ENCODE measurements at regions of chr7 and their contacts with region 1.

Region 1: GRCh38 chr7:156903232-156903909 is 10.4 kb upstream of the LMBR1 start:
- DNase-seq: peak in 6 of 9 donors; percentile 12 to 43 (median 28)
- ATAC-seq: peak; percentile 46
- H3K4me3 ChIP-seq: no peak overlapping the region
- H3K4me3 Mint-ChIP-seq: peak overlapping the region in 9 of 10 donors; percentile 1 to 59 (median 51)
- H3K27ac ChIP-seq: no peak overlapping the region
- H3K27ac Mint-ChIP-seq: peak overlapping the region; percentile 22 to 56 (median 44)
- H3K4me1 ChIP-seq: peaks cover 0 to 11% of the 10 kb centered on the region in 2 donors
- H3K4me1 Mint-ChIP-seq: peaks cover 7 to 13% (median 10%) of the 10 kb centered on the region in 7 donors
- H3K27me3 ChIP-seq: peaks cover 0 to 2% of the 10 kb centered on the region in 2 donors
- H3K27me3 Mint-ChIP-seq: peaks cover 0 to 5% (median 0%) of the 10 kb centered on the region in 5 donors

Region 2: DNA sequence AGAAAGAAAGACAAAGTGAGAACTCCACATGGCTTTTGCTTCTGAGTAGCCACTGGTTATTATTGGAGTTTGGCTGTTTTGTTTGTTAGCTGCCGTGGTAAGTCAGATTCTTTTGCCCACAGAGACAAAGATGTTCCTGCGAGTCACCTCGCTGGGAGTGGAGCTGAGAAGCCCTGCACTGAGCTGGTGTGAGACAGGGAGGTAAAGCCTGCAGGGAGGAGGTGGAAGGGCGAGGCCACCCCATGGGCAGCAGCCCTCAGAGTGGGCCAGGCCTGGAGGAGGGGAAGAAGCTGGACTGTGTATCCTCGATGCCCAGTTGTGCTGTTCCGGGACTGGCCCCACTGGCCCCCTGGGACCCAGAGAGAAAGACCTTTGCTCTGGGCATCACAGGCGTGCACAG is 31.9 kb after region 1 on chr7:
- CTCF ChIA-PET with region 1: no interaction called
- POLR2A ChIA-PET with region 1: no interaction called
- intact Hi-C with region 1: no loop called
- DNase-seq: no peak
- ATAC-seq: no peak
- H3K4me3 ChIP-seq: no peak overlapping the region
- H3K4me3 Mint-ChIP-seq: no peak overlapping the region
- H3K27ac ChIP-seq: no peak overlapping the region
- H3K27ac Mint-ChIP-seq: no peak overlapping the region
- H3K4me1 ChIP-seq: no peaks in the 10 kb centered on the region
- H3K4me1 Mint-ChIP-seq: peaks cover 0 to 12% (median 3%) of the 10 kb centered on the region in 7 donors
- H3K27me3 ChIP-seq: no peaks in the 10 kb centered on the region
- H3K27me3 Mint-ChIP-seq: peaks cover 0 to 15% (median 9%) of the 10 kb centered on the region in 5 donors

Region 3: GRCh38 chr7:157113607-157114006 is 210.2 kb after region 1 on chr7:
- CTCF ChIA-PET with region 1: interaction called, 11 read pairs
- POLR2A ChIA-PET with region 1: no interaction called
- intact Hi-C with region 1: no loop called
- DNase-seq: no peak
- ATAC-seq: no peak
- H3K4me3 ChIP-seq: no peak overlapping the region
- H3K4me3 Mint-ChIP-seq: no peak overlapping the region
- H3K27ac ChIP-seq: no peak overlapping the region
- H3K27ac Mint-ChIP-seq: no peak overlapping the region
- H3K4me1 ChIP-seq: no peaks in the 10 kb centered on the region
- H3K4me1 Mint-ChIP-seq: no peaks in the 10 kb centered on the region
- H3K27me3 ChIP-seq: no peaks in the 10 kb centered on the region
- H3K27me3 Mint-ChIP-seq: peaks cover 0 to 29% (median 22%) of the 10 kb centered on the region in 5 donors

Region 4: DNA sequence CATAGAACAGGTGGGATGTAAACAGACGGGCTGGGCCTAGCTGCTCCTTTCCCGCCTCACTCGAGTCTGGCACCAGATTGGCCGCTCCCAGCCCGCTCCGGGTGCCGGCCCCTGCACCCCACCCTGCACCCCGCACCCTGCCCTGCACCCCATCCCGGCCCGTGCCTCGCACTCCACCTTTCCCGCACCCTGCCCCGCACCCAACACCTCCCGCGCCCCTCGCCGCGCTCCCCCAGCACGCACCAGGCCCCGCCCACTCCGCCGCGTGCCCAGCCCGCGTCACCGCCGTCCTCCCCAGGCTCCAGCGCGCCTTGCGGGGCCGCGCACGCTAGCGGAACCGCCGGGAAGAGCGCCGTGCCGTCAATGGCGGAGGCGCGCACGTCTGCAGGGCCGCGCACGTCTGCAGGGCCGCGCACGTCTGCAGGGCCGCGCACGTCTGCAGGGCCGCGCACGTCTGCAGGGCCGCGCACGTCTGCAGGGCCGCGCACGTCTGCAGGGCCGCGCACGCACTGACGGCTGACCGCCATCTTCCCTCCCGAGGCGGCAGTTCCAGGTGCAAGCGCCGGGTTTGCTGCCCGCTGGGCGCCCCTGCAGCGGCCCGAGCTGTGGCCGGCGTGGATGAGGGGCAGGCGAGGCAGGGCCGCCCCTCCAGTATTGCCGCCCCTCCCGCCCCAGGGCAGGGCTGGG is 235.2 kb after region 1 on chr7 and contains the start of gene UBE3C:
- CTCF ChIA-PET with region 1: no interaction called
- POLR2A ChIA-PET with region 1: no interaction called
- intact Hi-C with region 1: loop called in 1 of 2 experiments (anchors 5 kb)
- DNase-seq: peak; percentile 88 to 96 (median 93)
- ATAC-seq: peak; percentile 91
- H3K4me3 ChIP-seq: peak within 1 kb of the TSS; percentile 82
- H3K4me3 Mint-ChIP-seq: peak within 1 kb of the TSS; percentile 77 to 93 (median 84)
- H3K27ac ChIP-seq: peak within 1 kb of the TSS; percentile 92
- H3K27ac Mint-ChIP-seq: peak within 1 kb of the TSS; percentile 76 to 99 (median 93)
- H3K4me1 ChIP-seq: peaks cover 35 to 43% of the 10 kb centered on the region in 2 donors
- H3K4me1 Mint-ChIP-seq: peaks cover 26 to 45% (median 42%) of the 10 kb centered on the region in 7 donors
- H3K27me3 ChIP-seq: no peaks in the 10 kb centered on the region
- H3K27me3 Mint-ChIP-seq: peaks cover 0 to 2% (median 0%) of the 10 kb centered on the region in 5 donors
- total RNA-seq, gene UBE3C: 41.6 to 64.6 (median 54.9) TPM

Region 5: GRCh38 chr7:157250605-157251228 is 347.3 kb after region 1 on chr7:
- CTCF ChIA-PET with region 1: no interaction called
- POLR2A ChIA-PET with region 1: no interaction called
- intact Hi-C with region 1: loop called in 1 of 2 experiments (anchors 2 kb)
- DNase-seq: peak in 7 of 9 donors; percentile 11 to 55 (median 37)
- ATAC-seq: peak; percentile 84
- H3K4me3 ChIP-seq: no peak overlapping the region
- H3K4me3 Mint-ChIP-seq: no peak overlapping the region
- H3K27ac ChIP-seq: no peak overlapping the region
- H3K27ac Mint-ChIP-seq: no peak overlapping the region
- H3K4me1 ChIP-seq: no peaks in the 10 kb centered on the region
- H3K4me1 Mint-ChIP-seq: peaks cover 0 to 5% (median 0%) of the 10 kb centered on the region in 7 donors
- H3K27me3 ChIP-seq: no peaks in the 10 kb centered on the region
- H3K27me3 Mint-ChIP-seq: no peaks in the 10 kb centered on the region